Esophagus squamous epithelium (tissue), 5 donors: ENCODE measurements at regions of chr18 and their contacts with region 1.

Region 1: GRCh38 chr18:23126376-23127056 is 8.8 kb upstream of the CABLES1 start:
- DNase-seq: no peak
- H3K4me3 ChIP-seq: no peak overlapping the region
- H3K27ac ChIP-seq: no peak overlapping the region
- H3K4me1 ChIP-seq: peaks cover 0 to 5% (median 0%) of the 10 kb centered on the region in 3 donors
- H3K27me3 ChIP-seq: no peaks in the 10 kb centered on the region
- CTCF ChIP-seq: no peak
- POLR2A ChIP-seq: no peak

Region 2: DNA sequence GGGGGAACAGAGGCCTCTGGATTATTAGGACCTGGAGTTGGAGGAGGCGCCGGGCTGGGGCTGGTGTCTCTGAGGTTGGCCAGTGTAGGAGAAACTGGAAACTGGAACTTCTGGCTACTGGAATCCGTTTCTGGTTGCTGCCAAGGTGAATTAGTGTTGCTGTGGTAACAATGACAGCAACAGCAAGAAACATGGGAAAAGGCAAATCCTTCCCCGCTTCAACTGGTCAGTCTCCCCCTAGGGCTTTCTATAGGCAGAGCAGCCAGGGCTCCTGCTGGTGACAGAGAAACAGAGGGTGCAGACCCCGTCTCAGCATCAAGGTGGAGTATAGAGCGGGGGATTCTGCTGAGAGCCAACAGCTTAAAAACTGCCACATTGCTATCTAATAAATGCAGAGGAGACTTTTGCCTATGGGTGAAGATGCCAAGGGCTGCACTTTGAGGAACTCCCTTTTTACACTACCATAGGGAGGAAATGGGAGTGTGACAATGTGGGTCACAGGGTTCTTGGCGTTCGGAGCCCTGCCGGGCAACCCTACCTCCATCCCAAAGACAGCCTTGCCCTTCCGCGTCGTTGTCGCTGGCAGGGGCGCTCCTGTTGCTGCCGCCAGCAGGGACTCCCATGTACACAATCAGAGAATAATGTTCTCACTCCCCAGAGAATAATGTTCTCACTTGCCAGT is 72.6 kb before region 1 on chr18:
- intact Hi-C with region 1: no loop called
- DNase-seq: no peak
- H3K4me3 ChIP-seq: peak overlapping the region in 1 of 4 donors; percentile 24
- H3K27ac ChIP-seq: no peak overlapping the region
- H3K4me1 ChIP-seq: peaks cover 0 to 16% (median 10%) of the 10 kb centered on the region in 3 donors
- H3K27me3 ChIP-seq: no peaks in the 10 kb centered on the region
- CTCF ChIP-seq: no peak
- POLR2A ChIP-seq: no peak

Region 3: GRCh38 chr18:23380001-23380550 is 253.6 kb after region 1 on chr18:
- intact Hi-C with region 1: loop called (anchors 5 kb)
- DNase-seq: no peak
- H3K4me3 ChIP-seq: no peak overlapping the region
- H3K27ac ChIP-seq: no peak overlapping the region
- H3K4me1 ChIP-seq: peaks cover 4 to 24% (median 19%) of the 10 kb centered on the region in 3 donors
- H3K27me3 ChIP-seq: no peaks in the 10 kb centered on the region
- CTCF ChIP-seq: no peak
- POLR2A ChIP-seq: no peak